BJ (cell line): ENCODE measurements at regions of chr10 and their contacts with region 1.

Region 1: GRCh38 chr10:56135828-56136227 is 225.2 kb downstream of the ZWINT start:
- DNase-seq: no peak
- H3K4me3 ChIP-seq: no peak overlapping the region
- H3K27me3 ChIP-seq: no peaks in the 10 kb centered on the region
- CTCF ChIP-seq: no peak

Region 2: GRCh38 chr10:55766212-55766611 is 369.6 kb before region 1 on chr10:
- CTCF ChIA-PET with region 1: no interaction called
- POLR2A ChIA-PET with region 1: interaction called, 13 read pairs
- DNase-seq: no peak
- H3K4me3 ChIP-seq: no peak overlapping the region
- H3K27me3 ChIP-seq: no peaks in the 10 kb centered on the region
- CTCF ChIP-seq: no peak

Region 3: GRCh38 chr10:56116684-56117083 is 19.1 kb before region 1 on chr10:
- CTCF ChIA-PET with region 1: no interaction called
- POLR2A ChIA-PET with region 1: no interaction called
- DNase-seq: no peak
- H3K4me3 ChIP-seq: no peak overlapping the region
- H3K27me3 ChIP-seq: no peaks in the 10 kb centered on the region
- CTCF ChIP-seq: no peak